Cardiac septum (tissue), 1 donor: ENCODE measurements at regions of chr5 and their contacts with region 1.

Region 1: DNA sequence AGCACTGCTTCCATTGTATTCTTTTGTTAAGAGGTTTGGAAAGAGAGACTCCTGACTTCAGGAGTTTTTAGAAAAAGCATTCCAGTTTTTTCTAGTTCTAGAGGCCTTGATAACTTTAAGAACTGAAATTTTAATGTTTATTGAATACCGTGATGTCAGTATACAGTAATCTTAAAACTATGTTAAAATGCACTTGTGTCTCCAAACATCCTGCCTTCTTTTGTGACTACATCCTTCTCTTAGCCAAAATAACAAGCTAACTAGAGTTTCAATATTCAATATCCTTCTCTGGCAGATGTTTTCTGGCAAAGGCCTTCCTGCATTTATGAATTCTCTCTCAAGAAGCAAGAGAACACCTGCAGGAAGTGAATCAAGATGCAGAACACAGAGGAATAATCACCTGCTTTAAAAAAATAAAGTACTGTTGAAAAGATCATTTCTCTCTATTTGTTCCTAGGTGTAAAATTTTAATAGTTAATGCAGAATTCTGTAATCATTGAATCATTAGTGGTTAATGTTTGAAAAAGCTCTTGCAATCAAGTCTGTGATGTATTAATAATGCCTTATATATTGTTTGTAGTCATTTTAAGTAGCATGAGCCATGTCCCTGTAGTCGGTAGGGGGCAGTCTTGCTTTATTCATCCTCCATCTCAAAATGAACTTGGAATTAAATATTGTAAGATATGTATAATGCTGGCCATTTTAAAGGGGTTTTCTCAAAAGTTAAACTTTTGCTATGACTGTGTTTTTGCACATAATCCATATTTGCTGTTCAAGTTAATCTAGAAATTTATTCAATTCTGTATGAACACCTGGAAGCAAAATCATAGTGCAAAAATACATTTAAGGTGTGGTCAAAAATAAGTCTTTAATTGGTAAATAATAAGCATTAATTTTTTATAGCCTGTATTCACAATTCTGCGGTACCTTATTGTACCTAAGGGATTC is 43.1 kb downstream of the NDFIP1 start:
- DNase-seq: no peak

Region 2: DNA sequence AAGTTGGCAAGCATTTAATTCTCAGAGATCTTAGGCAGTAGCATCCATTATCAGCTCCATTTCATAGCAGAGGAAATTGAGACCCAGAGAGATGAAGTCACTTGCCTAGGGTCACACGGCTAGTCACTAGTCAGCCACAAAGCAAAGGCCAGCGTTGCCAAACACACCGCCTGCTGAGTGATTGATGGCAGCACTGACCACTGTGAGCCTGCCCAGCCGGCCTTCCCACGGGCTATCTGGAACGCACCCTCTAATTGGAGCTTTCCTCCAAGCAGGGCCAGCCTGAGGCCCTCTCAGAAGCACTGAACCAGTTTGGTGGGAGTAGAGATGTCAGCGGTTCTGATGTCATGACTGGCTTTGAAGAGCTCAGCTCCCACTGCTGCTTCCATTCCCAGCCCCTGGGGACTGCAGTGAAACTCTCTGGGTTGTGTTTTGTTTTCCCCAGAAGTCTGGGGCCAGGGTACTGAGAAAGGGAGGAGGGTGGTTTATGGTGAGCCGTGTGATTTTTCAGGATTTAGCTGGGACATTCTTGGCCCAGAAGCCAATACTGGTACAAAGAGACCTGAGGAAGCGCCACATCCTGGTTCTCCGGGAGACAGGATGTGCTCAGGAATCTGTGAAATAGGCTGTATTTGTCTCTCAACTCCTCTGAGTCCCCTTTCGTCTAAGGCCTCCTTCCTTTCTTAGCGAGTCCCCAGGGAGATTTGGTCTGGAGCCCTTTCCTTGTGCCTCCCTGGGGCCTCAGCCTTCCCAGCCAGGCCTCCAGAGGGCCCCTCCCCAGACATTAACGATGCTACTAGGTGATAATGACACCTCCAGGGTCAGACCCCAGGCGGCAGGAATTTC is 128.6 kb after region 1 on chr5:
- intact Hi-C with region 1: loop called (anchors 10 kb)
- DNase-seq: peak; percentile 84